ENCODE measurements at regions of chr12 and their contacts with region 1.

Region 1: DNA sequence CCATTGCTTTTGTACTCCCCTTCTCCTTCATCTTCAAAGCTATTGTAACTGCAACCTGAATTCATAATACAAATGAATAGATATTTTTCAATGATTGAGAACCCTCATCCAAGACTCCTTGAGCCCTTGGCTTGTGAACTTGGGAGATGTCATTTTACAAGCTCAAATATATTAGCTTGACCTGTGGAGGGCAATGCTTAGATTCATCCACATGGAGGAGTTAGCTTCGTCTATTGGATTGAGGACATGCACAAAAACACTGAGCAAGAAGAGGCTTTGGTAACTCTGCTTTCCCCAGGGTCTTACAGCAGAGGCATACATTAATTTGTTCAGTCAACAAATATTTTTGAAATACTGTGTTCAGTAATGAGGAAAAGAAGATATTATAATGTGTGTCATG is 101.1 kb downstream of the OTOGL start:
- DNase-seq: no peak
- H3K4me3 ChIP-seq: no peak overlapping the region
- CTCF ChIP-seq: no peak

Region 2: GRCh38 chr12:80219345-80219744 is 18.9 kb after region 1 on chr12:
- CTCF ChIA-PET with region 1: interaction called, 10 read pairs
- POLR2A ChIA-PET with region 1: no interaction called
- DNase-seq: no peak
- H3K4me3 ChIP-seq: no peak overlapping the region
- CTCF ChIP-seq: no peak

Region 3: GRCh38 chr12:80422550-80422949 is 222.1 kb after region 1 on chr12:
- CTCF ChIA-PET with region 1: no interaction called
- POLR2A ChIA-PET with region 1: no interaction called
- DNase-seq: peak; percentile 75
- H3K4me3 ChIP-seq: no peak overlapping the region
- CTCF ChIP-seq: no peak

Region 4: GRCh38 chr12:81257947-81258551 is 1057.6 kb after region 1 on chr12:
- CTCF ChIA-PET with region 1: interaction called, 35 read pairs
- POLR2A ChIA-PET with region 1: no interaction called
- DNase-seq: no peak
- H3K4me3 ChIP-seq: no peak overlapping the region
- CTCF ChIP-seq: peak; percentile 38